ENCODE measurements at regions of chr3 and their contacts with region 1.

Region 1: GRCh38 chr3:22485954-22486353 is 717.2 kb upstream of the UBE2E2 start:
- DNase-seq: no peak
- H3K4me3 ChIP-seq: no peak overlapping the region
- H3K27ac ChIP-seq: no peak overlapping the region
- H3K4me1 ChIP-seq: no peaks in the 10 kb centered on the region
- H3K27me3 ChIP-seq: no peaks in the 10 kb centered on the region
- CTCF ChIP-seq: no peak

Region 2: GRCh38 chr3:22439626-22440025 is 46.3 kb before region 1 on chr3:
- CTCF ChIA-PET with region 1: no interaction called
- dilution Hi-C with region 1: loop called (anchors 5 kb)
- in situ Hi-C with region 1: no loop called
- intact Hi-C with region 1: no loop called
- DNase-seq: no peak
- H3K4me3 ChIP-seq: no peak overlapping the region
- H3K27ac ChIP-seq: no peak overlapping the region
- H3K4me1 ChIP-seq: no peaks in the 10 kb centered on the region
- H3K27me3 ChIP-seq: peaks cover 1% of the 10 kb centered on the region
- CTCF ChIP-seq: no peak

Measured in mammary epithelial cell (primary cell).